ENCODE measurements at regions of chr1 and their contacts with region 1.

Region 1: GRCh38 chr1:161440312-161440894 is 64.9 kb upstream of the FCGR2A start:
- DNase-seq: peak; percentile 46 to 82
- H3K4me3 ChIP-seq: peak overlapping the region; percentile 90
- H3K27ac ChIP-seq: peak overlapping the region; percentile 47
- H3K4me1 ChIP-seq: 0 out of 2 replicates have a peak, but pooled peaks cover 4% of the 10 kb centered on the region
- H3K27me3 ChIP-seq: no peaks in the 10 kb centered on the region
- CTCF ChIP-seq: peak; percentile 82

Region 2: GRCh38 chr1:161399257-161399998 is 41.0 kb before region 1 on chr1:
- CTCF ChIA-PET with region 1: no interaction called
- POLR2A ChIA-PET with region 1: no interaction called
- intact Hi-C with region 1: loop called (anchors 10 kb)
- DNase-seq: peak; percentile 83 to 84
- H3K4me3 ChIP-seq: peak overlapping the region; percentile 67
- H3K27ac ChIP-seq: peak overlapping the region; percentile 99
- H3K4me1 ChIP-seq: peaks cover 44% of the 10 kb centered on the region
- H3K27me3 ChIP-seq: no peaks in the 10 kb centered on the region
- CTCF ChIP-seq: peak; percentile 59

Measured in PC-9 (cell line).